GM13977 (cell line): ENCODE measurements at regions of chr3 and their contacts with region 1.

Region 1: DNA sequence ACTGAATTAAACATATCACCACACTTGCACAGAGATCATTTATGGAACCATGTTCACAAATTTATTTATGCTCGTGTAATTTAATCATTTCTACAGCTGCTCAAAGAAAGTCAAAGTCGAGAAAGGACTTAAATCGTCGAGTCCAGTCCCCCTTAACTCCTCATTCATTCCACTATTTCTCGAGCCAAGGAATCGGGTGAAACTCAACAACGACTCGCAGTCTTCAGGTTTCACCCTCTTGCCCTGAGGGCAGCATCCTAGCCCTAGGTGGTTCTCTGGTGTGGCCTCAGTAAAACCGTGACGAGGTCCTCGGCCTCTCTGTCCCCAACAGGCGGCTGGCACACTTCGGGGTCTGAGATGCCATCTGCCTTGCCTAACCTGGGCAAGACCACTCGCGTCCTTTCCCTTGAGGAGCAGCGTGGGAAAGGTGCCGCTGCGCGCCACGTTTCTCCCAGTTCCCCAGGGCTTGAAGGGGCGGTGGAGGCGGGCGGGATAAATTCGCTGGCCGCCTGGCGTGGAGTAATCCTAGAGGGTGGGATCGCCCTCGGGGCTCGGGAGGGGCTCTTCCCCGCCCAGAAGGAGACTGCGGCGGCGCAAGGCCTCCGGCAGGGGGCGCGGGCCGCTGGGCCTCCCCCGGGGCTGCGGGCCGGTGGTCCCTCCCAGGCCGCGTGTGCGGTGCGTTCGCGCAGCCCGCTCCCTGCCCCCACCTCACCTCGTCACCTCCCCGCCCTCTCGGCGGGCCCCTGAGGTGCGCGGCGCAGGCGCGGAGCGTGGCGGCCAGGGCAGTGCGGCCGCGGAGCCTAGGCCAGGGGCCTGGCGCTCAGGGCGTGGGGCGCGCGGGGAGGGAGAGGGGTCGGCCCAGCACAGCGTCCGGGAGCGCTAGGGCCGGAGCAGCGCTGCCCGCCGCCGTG is at the start of gene ZNF639:
- DNase-seq: peak; percentile 95
- CTCF ChIP-seq: peak; percentile 91

Region 2: DNA sequence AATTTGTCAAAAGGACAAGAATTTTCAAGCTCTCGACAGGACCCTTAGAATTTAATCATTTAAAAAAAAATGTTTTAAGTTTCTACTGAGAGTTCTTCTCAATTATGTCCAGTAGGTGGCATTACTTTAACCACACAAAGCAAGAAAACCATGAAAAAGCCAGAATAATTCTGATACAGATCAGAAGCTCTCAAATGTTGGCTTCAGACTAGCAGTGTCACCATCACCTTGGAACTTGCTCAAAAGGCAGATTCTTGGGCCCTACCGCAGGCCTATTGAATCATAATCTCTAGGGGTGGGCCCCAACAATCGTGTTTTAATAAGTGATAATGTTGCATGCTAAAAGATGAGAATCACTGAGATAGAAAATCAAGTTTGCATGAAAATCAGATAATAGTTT is 885.8 kb before region 1 on chr3:
- in situ Hi-C with region 1: loop called (anchors 25 kb)
- DNase-seq: peak; percentile 54
- CTCF ChIP-seq: peak; percentile 46

Region 3: DNA sequence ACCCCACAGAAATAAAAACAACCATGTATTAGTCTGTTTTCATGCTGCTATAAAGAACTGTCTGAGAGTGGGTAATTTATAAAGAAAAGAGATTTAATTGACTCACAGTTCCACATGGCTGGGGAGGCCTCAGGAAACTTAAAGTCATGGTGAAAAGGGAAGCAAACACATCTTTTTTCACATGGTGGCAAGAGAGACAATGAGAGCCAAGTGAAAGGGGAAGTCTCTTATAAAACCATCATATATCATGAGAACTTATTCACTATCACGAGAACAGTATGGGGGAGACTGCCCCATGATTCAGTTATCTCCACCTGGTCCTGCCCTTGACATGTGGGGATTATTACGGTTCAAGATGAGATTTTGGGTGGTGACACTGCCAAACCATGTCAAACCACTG is 392.4 kb before region 1 on chr3:
- in situ Hi-C with region 1: no loop called
- DNase-seq: no peak
- CTCF ChIP-seq: no peak

Region 4: DNA sequence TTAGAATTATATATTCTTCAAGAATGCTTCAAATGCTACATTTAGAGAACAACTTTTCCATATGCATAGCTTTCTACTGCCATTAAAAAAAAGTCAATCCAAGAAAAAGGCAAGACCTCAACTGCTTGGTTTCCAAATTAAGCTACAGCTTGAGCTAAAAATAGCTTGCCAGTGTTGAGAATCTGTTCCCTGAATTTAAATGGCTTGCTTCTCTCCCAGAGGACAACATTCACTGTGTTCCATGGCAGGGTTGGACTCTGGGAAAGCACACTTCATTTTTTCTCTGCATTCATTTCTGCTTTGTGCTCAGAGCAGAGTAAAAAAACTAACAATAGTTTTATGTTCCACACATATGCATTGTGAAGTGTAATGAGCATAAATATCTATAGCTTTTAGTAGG is 189.8 kb after region 1 on chr3:
- in situ Hi-C with region 1: no loop called
- DNase-seq: no peak
- CTCF ChIP-seq: no peak